GM18951 (cell line): ENCODE measurements at regions of chr17 and their contacts with region 1.

Region 1: GRCh38 chr17:75758117-75758926 is 6.7 kb downstream of the GALK1 start:
- POLR2A ChIP-seq: no peak

Region 2: DNA sequence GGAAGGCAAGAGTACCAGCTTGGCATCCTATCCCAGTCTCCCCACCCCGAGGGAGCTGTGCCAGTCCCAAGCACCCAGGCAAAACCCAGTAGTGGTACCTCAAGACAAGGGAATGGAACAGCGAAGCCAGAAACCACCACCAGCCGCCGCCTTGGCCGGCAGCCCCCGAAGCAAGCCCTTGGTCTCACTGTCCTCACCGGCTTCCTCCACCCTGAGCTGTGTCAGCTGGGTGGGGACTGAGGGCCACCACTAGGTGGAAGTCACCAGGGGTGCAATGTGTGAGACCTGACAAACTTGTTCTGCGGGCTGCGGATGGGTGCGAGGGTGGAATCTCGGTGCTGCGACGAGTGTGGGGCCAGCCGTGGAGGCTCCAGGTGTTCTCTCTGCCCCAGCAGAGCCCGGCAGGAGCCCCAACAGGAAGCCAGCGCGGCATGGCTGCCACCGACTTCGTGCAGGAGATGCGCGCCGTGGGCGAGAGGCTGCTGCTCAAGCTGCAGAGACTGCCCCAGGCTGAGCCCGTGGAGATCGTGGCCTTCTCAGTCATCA is 118.5 kb before region 1 on chr17:
- in situ Hi-C with region 1: loop called (anchors 5 kb)
- POLR2A ChIP-seq: no peak